Colonic mucosa (tissue), 4 donors: ENCODE measurements at regions of chr5 and their contacts with region 1.

Region 1: GRCh38 chr5:115571441-115571878 is 26.9 kb upstream of the FEM1C start:
- DNase-seq: no peak
- H3K4me3 ChIP-seq: no peak overlapping the region
- H3K27ac ChIP-seq: no peak overlapping the region
- H3K4me1 ChIP-seq: no peaks in the 10 kb centered on the region
- H3K27me3 ChIP-seq: no peaks in the 10 kb centered on the region
- CTCF ChIP-seq: no peak

Region 2: DNA sequence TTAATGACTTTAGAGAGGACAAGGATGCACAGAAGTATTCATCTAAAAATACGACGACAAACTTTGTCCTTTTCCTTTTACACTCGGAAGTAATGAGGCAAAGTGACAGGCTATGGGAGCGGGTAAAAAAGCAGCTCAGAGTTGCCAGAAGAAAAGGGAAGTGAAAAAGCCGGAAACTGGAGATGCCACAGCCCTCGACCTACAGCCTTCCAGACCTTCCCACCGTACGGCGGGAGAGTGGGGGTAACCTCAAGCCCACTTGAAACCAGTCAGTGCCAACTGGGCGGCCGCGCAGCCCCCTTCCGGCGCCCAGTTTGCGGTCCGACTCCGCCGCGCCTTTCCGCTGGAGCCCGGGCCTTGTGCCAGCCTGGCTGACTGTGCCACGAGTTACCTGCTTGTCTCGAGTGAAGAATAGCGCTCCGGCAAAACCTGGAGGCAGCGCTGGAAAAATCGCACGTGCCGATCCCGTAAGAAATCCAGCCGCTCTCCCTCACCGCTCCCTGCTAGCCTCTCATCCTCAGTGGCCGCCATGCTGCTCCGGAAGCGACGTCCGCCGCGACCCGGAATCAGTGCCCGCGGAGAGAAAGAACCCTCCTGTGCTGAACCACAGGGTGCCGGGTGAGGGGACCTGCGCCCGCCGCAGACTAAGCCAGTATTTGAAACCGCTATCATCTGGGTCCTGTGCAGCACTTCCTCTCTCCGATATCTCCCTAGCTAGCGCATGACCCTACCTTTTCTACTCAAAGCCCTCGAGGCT is 309.0 kb before region 1 on chr5 and contains the start of gene PGGT1B:
- intact Hi-C with region 1: no loop called
- DNase-seq: peak; percentile 87
- H3K4me3 ChIP-seq: peak within 1 kb of the TSS; percentile 90
- H3K27ac ChIP-seq: peak within 1 kb of the TSS; percentile 91
- H3K4me1 ChIP-seq: peaks cover 6% of the 10 kb centered on the region
- H3K27me3 ChIP-seq: no peaks in the 10 kb centered on the region
- CTCF ChIP-seq: no peak
- total RNA-seq, gene PGGT1B: 73.6 to 92.0 TPM

Region 3: GRCh38 chr5:115372146-115372545 is 199.3 kb before region 1 on chr5:
- intact Hi-C with region 1: loop called (anchors 5 kb)
- DNase-seq: no peak
- H3K4me3 ChIP-seq: no peak overlapping the region
- H3K27ac ChIP-seq: no peak overlapping the region
- H3K4me1 ChIP-seq: no peaks in the 10 kb centered on the region
- H3K27me3 ChIP-seq: no peaks in the 10 kb centered on the region
- CTCF ChIP-seq: no peak